Heart right ventricle (tissue), 16 donors: ENCODE measurements at regions of chr17 and their contacts with region 1.

Region 1: GRCh38 chr17:4420692-4421131 is 13.0 kb upstream of the SPNS3 start:
- DNase-seq: peak in 1 of 2 donors; percentile 70
- ATAC-seq: peak; percentile 76 to 93 (median 90)
- H3K4me3 ChIP-seq: no peak overlapping the region
- H3K27ac ChIP-seq: no peak overlapping the region
- H3K4me1 ChIP-seq: peaks cover 0 to 5% (median 0%) of the 10 kb centered on the region in 9 donors
- H3K27me3 ChIP-seq: no peaks in the 10 kb centered on the region
- CTCF ChIP-seq: peak; percentile 75 to 90 (median 85)

Region 2: GRCh38 chr17:4474093-4474492 is 53.4 kb after region 1 on chr17:
- intact Hi-C with region 1: loop called in 1 of 10 experiments (anchors 5 kb)
- DNase-seq: peak; percentile 72 to 83
- ATAC-seq: peak; percentile 76 to 94 (median 84)
- H3K4me3 ChIP-seq: no peak overlapping the region
- H3K27ac ChIP-seq: peak overlapping the region in 6 of 10 donors; percentile 33 to 68 (median 58)
- H3K4me1 ChIP-seq: peaks cover 0 to 36% (median 17%) of the 10 kb centered on the region in 9 donors
- H3K27me3 ChIP-seq: no peaks in the 10 kb centered on the region
- CTCF ChIP-seq: no peak

Region 3: DNA sequence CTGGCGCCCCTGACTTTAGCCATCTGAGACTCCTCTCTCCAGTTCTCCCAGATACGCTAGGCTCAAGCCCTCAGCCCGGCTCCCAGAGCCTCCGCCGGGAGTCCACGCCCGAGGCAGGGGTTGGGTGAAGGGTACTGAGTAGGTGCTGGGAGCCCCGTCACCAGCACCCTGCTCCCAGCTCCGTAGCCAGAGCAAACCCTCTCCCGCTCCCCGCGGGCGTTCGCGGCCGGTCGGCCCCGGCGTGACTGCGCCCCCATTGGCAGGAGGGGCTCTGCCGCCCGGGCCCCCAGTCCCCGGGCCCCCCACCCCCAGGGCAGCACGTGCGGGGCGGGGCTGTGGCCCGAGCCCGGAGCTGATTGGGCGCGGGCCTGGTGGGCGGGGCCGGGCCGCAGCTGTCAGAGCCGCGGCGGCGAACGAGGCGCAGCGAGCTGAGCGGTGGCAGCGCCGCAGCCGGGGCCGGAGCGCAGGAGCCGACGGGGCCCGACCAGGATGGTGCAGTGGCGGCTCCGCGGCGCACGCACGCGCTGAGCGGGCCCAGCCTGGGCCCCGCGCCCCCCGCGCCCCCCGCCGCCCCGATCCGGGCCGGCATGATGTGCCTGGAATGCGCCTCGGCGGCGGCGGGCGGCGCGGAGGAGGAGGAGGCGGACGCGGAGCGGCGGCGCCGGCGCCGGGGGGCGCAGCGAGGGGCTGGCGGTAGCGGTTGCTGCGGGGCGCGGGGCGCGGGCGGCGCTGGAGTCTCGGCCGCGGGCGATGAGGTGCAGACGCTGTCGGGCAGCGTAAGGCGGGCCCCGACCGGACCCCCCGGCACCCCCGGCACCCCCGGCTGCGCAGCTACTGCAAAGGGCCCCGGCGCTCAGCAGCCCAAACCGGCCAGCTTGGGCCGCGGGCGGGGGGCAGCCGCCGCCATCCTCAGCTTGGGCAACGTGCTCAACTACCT is 78.0 kb after region 1 on chr17 and contains the start of gene SPNS2:
- intact Hi-C with region 1: loop called in 3 of 10 experiments (anchors 5 to 10 kb)
- DNase-seq: peak; percentile 62 to 77
- ATAC-seq: peak; percentile 84 to 90 (median 88)
- H3K4me3 ChIP-seq: peak within 1 kb of the TSS; percentile 55 to 67 (median 60)
- H3K27ac ChIP-seq: peak within 1 kb of the TSS; percentile 11 to 85 (median 78)
- H3K4me1 ChIP-seq: peaks cover 7 to 52% (median 35%) of the 10 kb centered on the region in 9 donors
- H3K27me3 ChIP-seq: peaks cover 0 to 40% (median 0%) of the 10 kb centered on the region in 7 donors
- CTCF ChIP-seq: peak in 1 of 9 donors; percentile 21
- total RNA-seq, gene SPNS2: 4.5 to 19.9 (median 8.9) TPM

Region 4: DNA sequence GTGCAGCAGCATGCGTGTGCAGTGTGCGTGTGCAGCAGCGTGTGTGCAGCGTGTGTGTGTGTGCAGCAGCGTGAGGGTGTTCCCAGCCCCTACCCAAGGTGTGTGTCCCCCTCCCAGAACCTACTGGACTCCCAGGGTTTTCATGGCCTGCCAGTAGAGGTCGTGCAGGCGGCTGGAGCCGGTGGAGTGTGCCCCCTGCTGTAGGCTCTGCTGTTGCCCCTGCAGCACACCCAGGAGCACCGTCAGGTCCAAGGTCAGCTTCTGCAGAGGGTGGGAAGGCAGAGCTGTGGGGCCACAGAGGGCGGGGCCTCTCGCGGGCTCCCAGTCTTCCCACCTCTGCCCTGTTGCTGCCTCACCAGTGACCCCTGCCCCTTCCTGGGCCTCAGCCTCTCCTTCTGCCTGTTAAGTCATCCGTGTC is 119.5 kb after region 1 on chr17:
- intact Hi-C with region 1: loop called in 8 of 10 experiments (anchors 2 to 10 kb)
- DNase-seq: peak in 1 of 2 donors; percentile 21
- ATAC-seq: no peak
- H3K4me3 ChIP-seq: no peak overlapping the region
- H3K27ac ChIP-seq: peak overlapping the region in 8 of 10 donors; percentile 35 to 83 (median 73)
- H3K4me1 ChIP-seq: peaks cover 25 to 69% (median 51%) of the 10 kb centered on the region in 9 donors
- H3K27me3 ChIP-seq: no peaks in the 10 kb centered on the region
- CTCF ChIP-seq: peak in 5 of 9 donors; percentile 15 to 41 (median 27)

Region 5: GRCh38 chr17:4565209-4566141 is 144.8 kb after region 1 on chr17:
- intact Hi-C with region 1: loop called in 3 of 10 experiments (anchors 2 to 5 kb)
- DNase-seq: peak in 1 of 2 donors; percentile 68
- ATAC-seq: peak; percentile 64 to 93 (median 84)
- H3K4me3 ChIP-seq: no peak overlapping the region
- H3K27ac ChIP-seq: peak overlapping the region in 3 of 10 donors; percentile 19 to 43 (median 32)
- H3K4me1 ChIP-seq: peaks cover 0 to 32% (median 15%) of the 10 kb centered on the region in 9 donors
- H3K27me3 ChIP-seq: no peaks in the 10 kb centered on the region
- CTCF ChIP-seq: peak; percentile 75 to 87 (median 81)

Region 6: GRCh38 chr17:4648741-4649140 is 228.0 kb after region 1 on chr17:
- intact Hi-C with region 1: no loop called
- DNase-seq: no peak
- ATAC-seq: no peak
- H3K4me3 ChIP-seq: no peak overlapping the region
- H3K27ac ChIP-seq: no peak overlapping the region
- H3K4me1 ChIP-seq: peaks cover 0 to 13% (median 0%) of the 10 kb centered on the region in 9 donors
- H3K27me3 ChIP-seq: peaks cover 0 to 42% (median 23%) of the 10 kb centered on the region in 7 donors
- CTCF ChIP-seq: no peak